Panc1 (cell line): ENCODE measurements at regions of chr4 and their contacts with region 1.

Region 1: GRCh38 chr4:76504613-76505465 is 69.8 kb downstream of the SHROOM3 start:
- DNase-seq: no peak
- ATAC-seq: 0 out of 2 replicates have a peak, but pooled peaks have one; percentile 68
- H3K4me3 ChIP-seq: no peak overlapping the region
- H3K27ac ChIP-seq: no peak overlapping the region
- H3K4me1 ChIP-seq: no peaks in the 10 kb centered on the region
- H3K27me3 ChIP-seq: peaks cover 3% of the 10 kb centered on the region
- CTCF ChIP-seq: peak; percentile 64; the same call in 1 of the 2 replicates

Region 2: DNA sequence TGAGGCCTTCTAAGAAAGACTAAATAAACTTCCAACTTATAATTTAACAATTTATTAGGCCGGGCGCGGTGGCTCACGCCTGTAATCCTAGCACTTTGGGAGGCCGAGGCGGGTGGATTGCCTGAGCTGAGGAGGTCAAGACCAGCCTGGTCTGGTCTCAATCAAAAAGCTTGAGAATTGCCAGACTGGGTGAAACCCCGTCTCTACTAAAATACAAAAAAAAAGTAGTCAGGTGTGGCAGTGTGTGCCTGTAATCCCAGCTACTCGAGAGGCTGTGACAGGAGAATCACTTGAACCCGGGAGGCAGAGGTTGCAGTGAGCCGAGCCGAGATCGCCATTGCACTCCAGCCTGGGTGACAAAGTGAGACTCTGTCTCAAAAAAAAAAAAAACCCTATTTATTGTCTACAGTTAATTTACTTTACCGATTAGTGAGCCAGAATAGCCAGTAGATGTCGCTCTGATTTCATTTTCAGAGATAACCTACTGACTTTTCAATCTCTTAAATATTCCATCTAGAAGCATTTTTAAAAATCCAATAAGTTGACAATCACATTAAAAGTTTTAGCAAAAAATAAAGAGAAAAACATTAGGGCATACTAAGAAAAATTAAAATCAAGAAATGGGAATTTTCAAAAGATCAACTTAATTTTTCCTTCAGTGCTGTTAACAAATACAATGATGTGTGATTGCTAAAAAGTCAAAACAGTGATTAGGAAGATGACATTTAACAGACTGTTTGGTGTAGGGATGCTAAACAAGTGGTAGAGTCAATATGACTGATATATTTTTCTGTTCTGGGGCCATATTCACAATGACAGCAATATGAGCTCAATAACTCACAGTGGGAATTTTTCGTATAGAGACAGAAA is 74.1 kb before region 1 on chr4:
- CTCF ChIA-PET with region 1: interaction called, 7 read pairs
- POLR2A ChIA-PET with region 1: no interaction called
- in situ Hi-C with region 1: no loop called
- intact Hi-C with region 1: loop called (anchors 2 kb)
- DNase-seq: peak; percentile 10
- ATAC-seq: no peak
- H3K4me3 ChIP-seq: no peak overlapping the region
- H3K27ac ChIP-seq: no peak overlapping the region
- H3K4me1 ChIP-seq: no peaks in the 10 kb centered on the region
- H3K27me3 ChIP-seq: no peaks in the 10 kb centered on the region
- CTCF ChIP-seq: peak; percentile 76

Region 3: GRCh38 chr4:76689241-76689817 is 184.5 kb after region 1 on chr4:
- CTCF ChIA-PET with region 1: no interaction called
- POLR2A ChIA-PET with region 1: no interaction called
- in situ Hi-C with region 1: no loop called
- intact Hi-C with region 1: no loop called
- DNase-seq: no peak
- ATAC-seq: peak; percentile 92
- H3K4me3 ChIP-seq: peak overlapping the region; percentile 39 to 42
- H3K27ac ChIP-seq: no peak overlapping the region
- H3K4me1 ChIP-seq: peaks cover 2% of the 10 kb centered on the region
- H3K27me3 ChIP-seq: peaks cover 2% of the 10 kb centered on the region
- CTCF ChIP-seq: 0 out of 2 replicates have a peak, but pooled peaks have one; percentile 5